ENCODE measurements at regions of chr9 and their contacts with region 1.

Region 1: GRCh38 chr9:73183917-73184861 is 32.5 kb downstream of the ANXA1 start:
- DNase-seq: no peak
- ATAC-seq: no peak

Region 2: DNA sequence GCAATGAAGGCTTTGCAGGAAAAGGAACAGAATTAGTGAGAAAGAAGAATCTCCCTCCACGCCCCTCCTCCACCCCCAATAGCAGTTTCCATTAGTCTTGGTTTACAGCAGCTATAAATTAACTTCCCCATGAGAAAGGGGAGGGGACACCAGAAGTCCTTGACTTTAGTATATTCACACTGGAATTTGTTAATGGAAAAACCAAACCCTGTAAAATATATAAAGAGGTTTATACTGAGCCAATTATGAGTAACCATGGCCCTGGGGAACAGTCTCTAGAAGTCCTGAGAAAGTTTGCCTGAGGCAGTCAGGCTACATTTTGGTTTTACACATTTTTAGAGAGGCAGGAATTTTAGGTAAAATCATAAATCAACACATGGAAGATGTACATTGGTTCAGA is 319.9 kb before region 1 on chr9:
- intact Hi-C with region 1: loop called in 1 of 2 experiments (anchors 10 kb)
- DNase-seq: no peak
- ATAC-seq: no peak

Region 3: GRCh38 chr9:73104921-73105320 is 79.3 kb before region 1 on chr9:
- intact Hi-C with region 1: loop called (anchors 5 to 10 kb)
- DNase-seq: no peak
- ATAC-seq: no peak

Region 4: GRCh38 chr9:73116031-73116430 is 68.2 kb before region 1 on chr9:
- intact Hi-C with region 1: loop called in 1 of 2 experiments (anchors 10 kb)
- DNase-seq: no peak
- ATAC-seq: no peak

Measured in left colon (tissue), 2 donors.